Activated CD4-positive, alpha-beta T cell treated with anti-CD3 and anti-CD28 coated beads for 36 hours (primary cell): ENCODE measurements at regions of chr12 and their contacts with region 1.

Region 1: DNA sequence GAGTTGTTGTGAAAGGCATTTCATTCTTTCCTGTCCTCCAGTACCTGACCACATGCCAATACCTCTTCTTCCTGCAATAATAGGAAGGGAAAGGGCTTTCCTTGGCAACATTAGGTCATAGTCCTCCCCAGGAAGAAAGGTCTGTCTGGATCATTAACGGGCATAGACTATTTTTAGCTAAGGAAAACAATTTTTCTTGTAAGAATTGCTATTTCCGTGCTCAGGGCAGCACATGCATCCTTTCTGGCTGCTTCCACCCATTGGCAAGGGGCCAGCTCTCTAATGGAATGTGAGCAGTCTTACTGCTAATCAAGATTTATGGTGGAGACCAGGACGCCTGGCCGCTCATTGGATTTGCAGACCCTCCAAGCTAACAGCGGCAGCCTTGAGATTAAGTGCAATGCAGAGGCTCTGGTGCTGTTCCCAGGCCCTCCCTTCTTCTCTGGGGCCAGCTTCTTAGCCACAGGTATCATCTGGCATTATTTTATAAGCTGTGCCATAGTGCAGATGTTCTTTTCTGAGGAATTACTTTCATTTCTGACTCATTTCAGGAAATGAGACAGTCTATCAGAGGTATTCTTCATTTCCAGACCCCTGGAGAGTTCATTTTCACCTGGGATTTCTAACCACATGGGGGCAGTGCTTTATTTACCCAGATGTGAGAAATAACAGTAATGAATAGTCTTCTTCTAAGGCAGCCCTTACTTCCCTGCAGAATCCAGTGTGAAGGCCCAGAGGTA is 52.9 kb downstream of the ANO6 start:
- DNase-seq: no peak
- ATAC-seq: no peak
- H3K4me3 Mint-ChIP-seq: no peak overlapping the region
- H3K27ac Mint-ChIP-seq: no peak overlapping the region
- H3K4me1 Mint-ChIP-seq: peaks cover 7% of the 10 kb centered on the region
- H3K27me3 Mint-ChIP-seq: no peaks in the 10 kb centered on the region

Region 2: DNA sequence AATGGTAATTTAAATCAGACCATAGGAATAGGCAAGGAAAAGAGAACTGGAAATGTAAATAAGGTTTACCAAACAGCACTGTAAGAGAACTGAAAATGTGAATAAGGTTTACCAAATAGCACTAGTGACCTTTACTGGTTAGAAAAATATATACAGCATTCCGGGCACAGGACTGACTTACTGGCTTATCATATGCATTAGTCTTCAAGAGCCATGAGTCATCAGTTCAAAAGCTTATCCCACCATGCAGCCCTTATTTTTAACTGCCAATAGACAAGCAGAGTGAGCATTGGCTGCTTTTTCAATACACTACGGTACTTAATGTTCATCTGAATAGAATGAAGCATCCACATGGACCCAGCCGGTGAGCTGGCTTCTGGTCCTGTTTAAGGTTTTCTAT is 379.7 kb before region 1 on chr12:
- CTCF ChIA-PET with region 1: no interaction called
- POLR2A ChIA-PET with region 1: no interaction called
- intact Hi-C with region 1: no loop called
- DNase-seq: no peak
- ATAC-seq: no peak
- H3K4me3 Mint-ChIP-seq: no peak overlapping the region
- H3K27ac Mint-ChIP-seq: no peak overlapping the region
- H3K4me1 Mint-ChIP-seq: no peaks in the 10 kb centered on the region
- H3K27me3 Mint-ChIP-seq: no peaks in the 10 kb centered on the region

Region 3: DNA sequence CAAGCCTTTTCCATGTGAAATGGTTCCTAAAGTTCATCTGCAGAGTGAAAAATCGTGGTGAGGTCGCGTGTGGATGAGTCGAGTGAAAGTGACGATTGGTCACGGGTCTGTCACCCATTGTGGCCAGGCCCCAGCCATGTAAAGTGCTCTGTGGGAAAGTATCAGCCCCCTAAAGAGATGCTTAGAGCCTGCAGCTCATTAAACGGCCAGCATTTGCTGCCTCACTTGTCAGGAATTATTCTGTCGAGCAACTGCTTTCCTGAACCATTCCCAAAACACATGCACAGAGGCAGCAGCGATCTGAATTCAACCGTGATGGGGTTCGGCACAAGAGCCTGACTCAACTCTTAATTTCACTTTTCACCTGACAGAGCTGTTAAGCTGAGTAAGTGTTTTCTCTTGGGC is 234.0 kb before region 1 on chr12:
- CTCF ChIA-PET with region 1: no interaction called
- POLR2A ChIA-PET with region 1: no interaction called
- intact Hi-C with region 1: no loop called
- DNase-seq: no peak
- ATAC-seq: no peak
- H3K4me3 Mint-ChIP-seq: no peak overlapping the region
- H3K27ac Mint-ChIP-seq: no peak overlapping the region
- H3K4me1 Mint-ChIP-seq: no peaks in the 10 kb centered on the region
- H3K27me3 Mint-ChIP-seq: peaks cover 11% of the 10 kb centered on the region

Region 4: GRCh38 chr12:45257185-45257930 is 11.5 kb before region 1 on chr12:
- CTCF ChIA-PET with region 1: no interaction called
- POLR2A ChIA-PET with region 1: no interaction called
- intact Hi-C with region 1: loop called in 1 of 2 experiments (anchors 2 kb)
- DNase-seq: peak; percentile 27
- ATAC-seq: peak; percentile 66
- H3K4me3 Mint-ChIP-seq: no peak overlapping the region
- H3K27ac Mint-ChIP-seq: no peak overlapping the region
- H3K4me1 Mint-ChIP-seq: peaks cover 31% of the 10 kb centered on the region
- H3K27me3 Mint-ChIP-seq: no peaks in the 10 kb centered on the region